WTC11 (cell line): ENCODE measurements at regions of chr6 and their contacts with region 1.

Region 1: GRCh38 chr6:69796642-69797390 is at the start of gene LMBRD1:
- DNase-seq: peak; percentile 98
- ATAC-seq: peak; percentile 89
- H3K4me3 Mint-ChIP-seq: peak within 1 kb of the TSS; percentile 89
- H3K27ac Mint-ChIP-seq: peak within 1 kb of the TSS; percentile 98
- H3K4me1 Mint-ChIP-seq: peaks cover 40% of the 10 kb centered on the region
- H3K27me3 Mint-ChIP-seq: no peaks in the 10 kb centered on the region
- CTCF ChIP-seq: peak; percentile 97
- total RNA-seq, gene LMBRD1: 14.9 to 15.0 TPM (median 14.9 TPM) in 3 replicates

Region 2: GRCh38 chr6:69705954-69706353 is 90.9 kb before region 1 on chr6:
- CTCF ChIA-PET with region 1: no interaction called
- POLR2A ChIA-PET with region 1: no interaction called
- DNase-seq: no peak
- ATAC-seq: no peak
- H3K4me3 Mint-ChIP-seq: no peak overlapping the region
- H3K27ac Mint-ChIP-seq: no peak overlapping the region
- H3K4me1 Mint-ChIP-seq: no peaks in the 10 kb centered on the region
- H3K27me3 Mint-ChIP-seq: no peaks in the 10 kb centered on the region
- CTCF ChIP-seq: no peak

Region 3: DNA sequence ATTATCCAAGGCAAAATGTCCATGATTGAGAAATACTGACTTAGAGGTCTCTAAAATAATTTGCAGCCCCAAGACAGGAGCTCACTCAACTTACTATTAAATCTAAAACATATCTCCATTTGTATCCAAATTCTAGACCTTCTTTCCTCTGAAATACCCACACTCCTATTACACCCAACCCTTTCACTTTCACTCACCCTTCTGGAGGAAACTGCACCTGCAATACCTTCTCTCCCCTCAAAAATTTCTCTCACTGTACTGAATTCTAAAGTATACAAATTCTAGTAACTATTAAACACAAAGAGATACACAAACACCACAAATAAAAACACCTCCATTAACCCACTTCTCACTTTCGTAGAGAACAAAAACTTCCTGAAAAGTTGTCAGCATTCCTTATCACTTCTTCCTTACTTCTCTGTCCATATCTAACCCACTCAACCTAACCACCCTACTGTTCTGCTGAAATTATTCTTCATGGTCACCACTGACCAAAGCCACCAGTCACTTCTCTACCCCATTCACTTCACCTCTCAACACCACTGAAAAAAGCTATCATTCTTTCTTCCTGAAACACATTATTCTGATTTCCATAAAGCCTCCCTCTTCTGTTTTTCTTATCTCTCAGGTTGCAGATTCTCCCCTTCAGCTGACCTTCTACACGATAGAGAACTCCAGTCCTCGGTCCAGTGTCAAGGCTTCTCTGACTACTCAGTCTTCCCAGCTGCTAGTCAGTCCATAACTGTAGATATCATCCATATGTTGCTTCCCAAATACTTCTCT is 12.0 kb before region 1 on chr6:
- CTCF ChIA-PET with region 1: interaction called, 14 read pairs
- POLR2A ChIA-PET with region 1: no interaction called
- DNase-seq: no peak
- ATAC-seq: no peak
- H3K4me3 Mint-ChIP-seq: no peak overlapping the region
- H3K27ac Mint-ChIP-seq: no peak overlapping the region
- H3K4me1 Mint-ChIP-seq: peaks cover 10% of the 10 kb centered on the region
- H3K27me3 Mint-ChIP-seq: no peaks in the 10 kb centered on the region
- CTCF ChIP-seq: no peak

Region 4: DNA sequence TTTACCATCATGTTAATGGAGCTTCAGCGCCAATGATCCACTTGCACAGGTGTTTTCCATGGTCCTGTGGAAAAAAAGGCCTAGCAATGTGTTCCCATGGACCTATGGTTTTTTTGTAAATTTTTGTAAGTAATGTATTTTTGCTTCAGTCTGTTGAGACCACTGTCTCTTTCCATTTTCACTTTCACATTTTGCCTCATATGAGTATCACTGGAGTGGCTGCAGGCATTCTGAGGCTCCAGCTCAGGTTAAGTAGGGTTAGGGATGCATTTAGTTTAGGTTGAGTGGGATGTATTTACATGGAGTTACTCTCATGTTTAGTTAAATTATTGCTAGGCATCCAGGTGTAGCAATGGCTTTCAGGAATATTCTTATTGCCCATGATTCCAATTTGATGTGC is 19.2 kb after region 1 on chr6:
- CTCF ChIA-PET with region 1: interaction called, 13 read pairs
- POLR2A ChIA-PET with region 1: no interaction called
- DNase-seq: no peak
- ATAC-seq: no peak
- H3K4me3 Mint-ChIP-seq: no peak overlapping the region
- H3K27ac Mint-ChIP-seq: peak overlapping the region; percentile 81
- H3K4me1 Mint-ChIP-seq: peaks cover 40% of the 10 kb centered on the region
- H3K27me3 Mint-ChIP-seq: no peaks in the 10 kb centered on the region
- CTCF ChIP-seq: no peak

Region 5: DNA sequence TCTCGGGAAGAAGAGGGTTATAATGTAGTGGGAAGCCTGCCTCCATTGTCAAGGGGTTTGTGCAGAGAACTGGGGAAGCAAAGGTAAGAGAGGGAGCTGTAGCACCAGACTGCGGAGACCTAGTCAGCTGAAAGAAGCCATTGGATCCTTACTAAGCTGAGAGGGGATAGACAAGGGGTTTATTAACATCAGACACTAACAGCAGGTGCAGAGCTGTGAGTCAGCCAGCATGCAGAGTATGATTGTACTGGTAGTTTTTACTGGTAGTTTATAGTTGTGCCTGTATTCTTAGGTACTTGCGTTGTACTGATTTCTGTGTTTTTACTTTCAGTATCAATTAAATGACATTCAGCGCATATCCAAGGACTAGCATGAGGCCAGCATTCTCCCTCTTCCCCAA is 51.7 kb after region 1 on chr6:
- CTCF ChIA-PET with region 1: no interaction called
- POLR2A ChIA-PET with region 1: no interaction called
- DNase-seq: no peak
- ATAC-seq: peak; percentile 53
- H3K4me3 Mint-ChIP-seq: no peak overlapping the region
- H3K27ac Mint-ChIP-seq: no peak overlapping the region
- H3K4me1 Mint-ChIP-seq: no peaks in the 10 kb centered on the region
- H3K27me3 Mint-ChIP-seq: no peaks in the 10 kb centered on the region
- CTCF ChIP-seq: no peak

Region 6: DNA sequence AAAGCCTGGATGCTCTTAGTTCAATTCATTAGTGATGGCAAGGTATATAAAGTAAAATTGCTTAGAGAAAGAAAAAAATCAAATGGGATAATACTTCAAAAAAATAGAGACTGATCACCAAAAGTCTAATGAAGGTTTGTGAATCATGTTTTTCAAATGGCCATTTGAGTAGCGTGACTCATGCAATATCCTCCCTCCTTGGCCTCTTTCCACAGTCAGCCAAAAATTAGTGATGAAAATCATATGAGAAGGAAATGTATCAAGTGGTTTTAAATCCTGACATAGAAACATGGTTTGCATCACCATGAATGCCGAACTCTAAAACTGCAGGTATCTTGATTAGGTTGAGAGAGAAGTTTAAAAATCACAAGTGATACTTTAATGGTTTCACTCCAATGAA is 68.3 kb after region 1 on chr6:
- CTCF ChIA-PET with region 1: interaction called, 11 read pairs
- POLR2A ChIA-PET with region 1: interaction called, 4 read pairs
- DNase-seq: no peak
- ATAC-seq: no peak
- H3K4me3 Mint-ChIP-seq: no peak overlapping the region
- H3K27ac Mint-ChIP-seq: no peak overlapping the region
- H3K4me1 Mint-ChIP-seq: peaks cover 33% of the 10 kb centered on the region
- H3K27me3 Mint-ChIP-seq: peaks cover 56% of the 10 kb centered on the region
- CTCF ChIP-seq: no peak